ENCODE measurements at regions of chr2 and their contacts with region 1.

Region 1: GRCh38 chr2:233404222-233404621 is 49.9 kb downstream of the DGKD start:
- DNase-seq: peak; percentile 91
- H3K4me3 Mint-ChIP-seq: no peak overlapping the region
- H3K27ac Mint-ChIP-seq: peak overlapping the region; percentile 1
- H3K4me1 Mint-ChIP-seq: peaks cover 38% of the 10 kb centered on the region
- H3K27me3 Mint-ChIP-seq: no peaks in the 10 kb centered on the region

Region 2: DNA sequence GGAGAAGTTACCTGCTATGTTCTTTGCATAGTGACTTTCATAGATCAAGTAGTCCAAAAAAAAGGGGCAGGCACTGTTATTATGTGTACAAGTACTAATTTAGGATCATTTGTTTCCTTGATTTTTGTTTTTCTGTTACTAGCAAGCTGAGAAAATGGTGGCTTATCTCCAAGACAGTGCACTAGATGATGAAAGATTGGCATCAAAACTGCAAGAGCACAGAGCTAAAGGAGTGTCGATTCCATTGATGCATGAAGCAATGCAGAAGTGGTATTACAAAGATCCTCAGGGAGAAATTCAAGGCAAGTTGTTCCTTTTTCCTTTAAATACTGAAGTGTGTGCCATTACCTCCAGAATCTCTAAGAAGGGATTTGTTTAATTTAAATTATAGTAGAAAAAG is 608.3 kb before region 1 on chr2:
- intact Hi-C with region 1: no loop called
- DNase-seq: no peak
- H3K4me3 Mint-ChIP-seq: no peak overlapping the region
- H3K27ac Mint-ChIP-seq: no peak overlapping the region
- H3K4me1 Mint-ChIP-seq: no peaks in the 10 kb centered on the region
- H3K27me3 Mint-ChIP-seq: no peaks in the 10 kb centered on the region

Region 3: GRCh38 chr2:233418761-233419625 is 14.8 kb after region 1 on chr2:
- intact Hi-C with region 1: loop called (anchors 2 kb)
- DNase-seq: peak; percentile 83
- H3K4me3 Mint-ChIP-seq: peak overlapping the region; percentile 82
- H3K27ac Mint-ChIP-seq: peak overlapping the region; percentile 83
- H3K4me1 Mint-ChIP-seq: peaks cover 87% of the 10 kb centered on the region
- H3K27me3 Mint-ChIP-seq: peaks cover 2% of the 10 kb centered on the region

Measured in activated CD4-positive, alpha-beta T cell treated with anti-CD3 and anti-CD28 coated beads, Interleukin-2, amount 10 ng/mL, durations not matched to agents 24 days and 14 days (primary cell).